Activated naive CD4-positive, alpha-beta T cell treated with anti-CD3 and anti-CD28 coated beads for 36 hours (primary cell): ENCODE measurements at regions of chr1 and their contacts with region 1.

Region 1: GRCh38 chr1:36420836-36421664 is 23.3 kb upstream of the LSM10 start:
- DNase-seq: peak; percentile 97
- H3K4me3 Mint-ChIP-seq: peak overlapping the region; percentile 45
- H3K27ac Mint-ChIP-seq: peak overlapping the region; percentile 93
- H3K4me1 Mint-ChIP-seq: peaks cover 20% of the 10 kb centered on the region
- H3K27me3 Mint-ChIP-seq: no peaks in the 10 kb centered on the region

Region 2: GRCh38 chr1:36099681-36100341 is 321.2 kb before region 1 on chr1:
- CTCF ChIA-PET with region 1: interaction called, 3 read pairs
- intact Hi-C with region 1: loop called (anchors 1 kb)
- DNase-seq: peak; percentile 85
- H3K4me3 Mint-ChIP-seq: no peak overlapping the region
- H3K27ac Mint-ChIP-seq: no peak overlapping the region
- H3K4me1 Mint-ChIP-seq: peaks cover 4% of the 10 kb centered on the region
- H3K27me3 Mint-ChIP-seq: no peaks in the 10 kb centered on the region

Region 3: GRCh38 chr1:36342481-36343478 is 78.3 kb before region 1 on chr1:
- CTCF ChIA-PET with region 1: interaction called, 47 read pairs
- intact Hi-C with region 1: loop called (anchors 1 kb)
- DNase-seq: peak; percentile 70
- H3K4me3 Mint-ChIP-seq: no peak overlapping the region
- H3K27ac Mint-ChIP-seq: peak overlapping the region; percentile 66
- H3K4me1 Mint-ChIP-seq: peaks cover 18% of the 10 kb centered on the region
- H3K27me3 Mint-ChIP-seq: no peaks in the 10 kb centered on the region

Region 4: DNA sequence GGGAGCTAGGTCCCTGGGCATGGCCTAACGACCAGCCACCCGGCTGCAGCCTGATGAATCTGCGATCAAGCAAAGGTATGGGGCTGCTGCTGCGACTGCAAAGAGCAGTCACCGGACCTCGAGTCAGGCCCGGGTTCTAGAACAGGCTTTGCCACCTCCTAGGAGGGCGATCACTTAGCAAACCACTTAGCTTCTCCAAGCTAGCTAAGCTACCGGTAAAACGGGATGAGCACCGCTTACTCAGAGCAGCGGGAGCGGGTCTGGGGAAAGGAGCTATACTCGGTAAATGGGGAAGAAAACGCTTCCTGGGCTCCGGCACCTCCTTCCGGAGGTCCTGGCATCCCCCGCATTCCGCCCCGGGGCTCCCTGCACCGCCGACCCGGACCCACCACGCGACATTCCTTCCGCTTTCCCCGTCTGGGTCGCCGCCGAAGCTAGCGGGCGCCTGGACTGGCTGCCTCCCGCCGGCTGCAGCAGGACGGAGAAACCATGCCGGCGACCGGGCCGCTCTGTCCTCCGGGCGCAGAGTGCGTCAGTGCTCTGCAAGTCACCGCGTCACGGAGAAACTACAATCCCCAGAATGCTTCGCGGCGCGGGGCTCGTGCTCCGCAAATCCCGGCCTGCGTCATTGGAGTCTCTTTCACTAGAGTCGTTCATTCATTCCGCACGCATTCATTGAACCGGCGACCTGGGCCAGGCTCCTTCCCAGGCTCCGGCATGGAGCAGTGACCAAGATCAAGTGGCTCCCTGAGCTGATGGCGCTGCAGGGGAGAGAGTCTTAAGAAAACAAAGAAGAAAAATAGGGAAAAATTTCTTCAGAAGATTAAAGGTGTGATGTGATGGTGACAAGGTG is 23.4 kb before region 1 on chr1 and contains the start of gene LSM10:
- CTCF ChIA-PET with region 1: interaction called, 5 read pairs
- intact Hi-C with region 1: loop called (anchors 1 kb)
- DNase-seq: peak; percentile 95
- H3K4me3 Mint-ChIP-seq: peak within 1 kb of the TSS; percentile 96
- H3K27ac Mint-ChIP-seq: peak within 1 kb of the TSS; percentile 94
- H3K4me1 Mint-ChIP-seq: peaks cover 35% of the 10 kb centered on the region
- H3K27me3 Mint-ChIP-seq: no peaks in the 10 kb centered on the region
- total RNA-seq, gene LSM10: 33.5 to 36.5 TPM